Gastrocnemius medialis (tissue), 4 donors: ENCODE measurements at regions of chr4 and their contacts with region 1.

Region 1: DNA sequence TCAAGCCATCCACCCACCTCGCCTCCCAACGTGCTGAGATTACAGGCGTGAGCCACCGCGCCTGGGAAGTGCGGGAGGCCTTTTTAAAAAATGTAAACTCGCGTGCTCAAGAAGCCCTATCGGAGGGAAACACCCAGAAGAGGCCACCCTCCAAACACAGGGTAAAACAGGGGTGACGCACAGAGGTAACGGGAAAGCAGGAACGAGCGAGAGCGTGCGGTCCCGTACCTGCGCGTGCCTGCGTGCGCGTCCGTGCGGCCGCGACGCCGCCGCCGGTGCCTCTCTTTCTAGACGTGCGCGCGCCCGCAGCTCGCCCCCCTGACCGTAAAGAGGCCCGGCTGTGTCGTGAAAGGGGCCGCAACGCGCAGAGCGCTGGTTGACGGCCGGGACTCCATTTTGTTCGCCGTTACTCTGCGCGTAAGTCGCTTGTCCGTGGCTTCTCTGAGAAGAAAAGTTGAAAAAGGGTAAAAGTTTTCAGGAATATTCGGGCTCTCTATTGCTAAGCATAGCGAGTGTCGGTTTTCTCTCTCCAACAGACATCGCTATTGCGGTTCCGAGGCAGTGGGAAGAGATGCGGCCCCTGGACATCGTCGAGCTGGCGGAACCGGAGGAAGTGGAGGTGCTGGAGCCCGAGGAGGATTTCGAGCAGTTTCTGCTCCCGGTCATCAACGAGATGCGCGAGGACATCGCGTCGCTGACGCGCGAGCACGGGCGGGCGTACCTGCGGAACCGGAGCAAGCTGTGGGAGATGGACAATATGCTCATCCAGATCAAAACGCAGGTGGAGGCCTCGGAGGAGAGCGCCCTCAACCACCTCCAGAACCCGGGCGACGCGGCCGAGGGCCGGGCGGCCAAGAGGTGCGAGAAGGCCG is at the start of gene MRFAP1:
- DNase-seq: peak; percentile 91 to 94
- ATAC-seq: peak; percentile 85 to 93
- H3K4me3 ChIP-seq: peak within 1 kb of the TSS; percentile 75 to 99 (median 86)
- H3K27ac ChIP-seq: peak within 1 kb of the TSS; percentile 91 to 98 (median 94)
- H3K4me1 ChIP-seq: peaks cover 35 to 48% of the 10 kb centered on the region in 2 donors
- H3K27me3 ChIP-seq: no peaks in the 10 kb centered on the region
- CTCF ChIP-seq: peak in 1 of 5 experiments; percentile 23
- POLR2A ChIP-seq: peak; percentile 76 to 88
- total RNA-seq, gene MRFAP1: 180 to 281 (median 206) TPM

Region 2: DNA sequence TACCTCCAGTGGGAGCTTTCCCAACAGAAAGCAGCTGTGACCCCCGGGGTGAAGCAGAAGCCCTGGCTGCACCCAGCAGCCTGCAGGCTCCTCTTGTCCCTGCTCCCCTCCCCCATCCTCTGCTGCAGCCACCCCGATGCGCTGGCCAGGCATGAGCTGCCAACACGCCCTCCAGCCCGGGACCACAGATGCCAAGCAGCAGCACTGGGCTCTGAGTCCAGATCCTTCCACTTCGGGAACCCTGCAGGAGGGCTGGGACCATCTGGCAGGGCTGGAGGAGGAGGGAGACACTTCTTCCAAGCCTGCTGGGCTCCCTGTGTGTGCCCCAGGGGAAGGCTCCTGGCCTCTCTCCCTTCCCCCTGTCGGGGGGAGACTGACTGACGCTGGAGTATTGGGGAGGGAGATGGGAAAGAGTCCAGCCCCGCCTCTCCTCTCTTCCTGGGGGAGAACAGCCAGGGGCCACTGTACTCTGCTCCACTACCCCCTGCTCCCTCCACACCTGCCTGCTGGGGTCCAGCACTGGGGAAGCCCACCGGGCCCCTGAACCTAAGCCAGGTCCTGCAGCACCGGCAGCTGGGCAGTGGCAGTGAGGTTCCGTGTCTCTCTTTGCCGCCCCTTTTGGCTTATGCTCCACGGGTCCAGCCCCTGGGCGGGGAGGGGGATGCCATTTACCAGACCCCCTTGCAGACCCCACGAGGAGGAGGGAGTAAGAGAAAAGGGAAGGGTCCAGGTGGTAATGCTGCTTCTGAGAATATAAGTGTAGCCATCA is 223.8 kb before region 1 on chr4:
- in situ Hi-C with region 1: no loop called
- intact Hi-C with region 1: no loop called
- DNase-seq: no peak
- ATAC-seq: no peak
- H3K4me3 ChIP-seq: no peak overlapping the region
- H3K27ac ChIP-seq: no peak overlapping the region
- H3K4me1 ChIP-seq: no peaks in the 10 kb centered on the region
- H3K27me3 ChIP-seq: peaks cover 0 to 11% (median 0%) of the 10 kb centered on the region in 3 donors
- CTCF ChIP-seq: no peak
- POLR2A ChIP-seq: no peak

Region 3: GRCh38 chr4:6574747-6575502 is 65.6 kb before region 1 on chr4 and contains the start of gene MAN2B2:
- in situ Hi-C with region 1: no loop called
- intact Hi-C with region 1: loop called (anchors 5 kb)
- DNase-seq: peak; percentile 63 to 77
- ATAC-seq: peak; percentile 90 to 94
- H3K4me3 ChIP-seq: peak within 1 kb of the TSS; percentile 65 to 86 (median 79)
- H3K27ac ChIP-seq: peak within 1 kb of the TSS in 3 of 4 donors; percentile 45 to 61 (median 49)
- H3K4me1 ChIP-seq: peaks cover 9% of the 10 kb centered on the region in 2 donors
- H3K27me3 ChIP-seq: no peaks in the 10 kb centered on the region
- CTCF ChIP-seq: no peak
- POLR2A ChIP-seq: no peak
- total RNA-seq, gene MAN2B2: 3.3 to 5.6 (median 4.5) TPM

Region 4: DNA sequence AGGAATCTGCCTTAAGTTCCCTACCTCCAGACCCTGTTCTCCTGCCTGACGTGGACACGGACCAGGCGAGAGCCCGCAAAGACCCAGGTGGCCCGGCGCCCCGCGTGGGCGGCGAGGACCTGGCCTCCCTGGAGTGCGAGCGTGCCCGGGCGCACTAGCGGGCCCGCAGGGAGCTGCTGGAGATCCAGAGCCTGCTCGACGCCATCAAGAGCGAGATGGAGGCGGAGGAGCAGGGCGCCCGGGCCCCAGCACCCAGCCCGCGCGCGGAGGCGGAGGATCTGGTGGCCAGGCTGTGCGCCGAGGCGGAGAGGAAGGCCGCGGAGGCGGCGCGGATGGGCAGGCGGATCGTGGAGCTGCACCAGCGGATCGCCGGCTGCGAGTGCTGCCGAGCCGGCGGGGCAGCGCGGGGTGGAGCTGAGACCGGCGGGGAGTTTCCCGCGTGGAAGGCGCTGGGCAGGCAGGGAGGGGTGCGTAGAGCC is 18.1 kb after region 1 on chr4:
- in situ Hi-C with region 1: no loop called
- intact Hi-C with region 1: loop called (anchors 2 kb)
- DNase-seq: no peak
- ATAC-seq: peak; percentile 26 to 40
- H3K4me3 ChIP-seq: peak overlapping the region; percentile 37 to 57 (median 46)
- H3K27ac ChIP-seq: peak overlapping the region in 2 of 4 donors; percentile 37 to 43
- H3K4me1 ChIP-seq: no peaks in the 10 kb centered on the region
- H3K27me3 ChIP-seq: peaks cover 0 to 11% (median 4%) of the 10 kb centered on the region in 3 donors
- CTCF ChIP-seq: no peak
- POLR2A ChIP-seq: no peak

Region 5: DNA sequence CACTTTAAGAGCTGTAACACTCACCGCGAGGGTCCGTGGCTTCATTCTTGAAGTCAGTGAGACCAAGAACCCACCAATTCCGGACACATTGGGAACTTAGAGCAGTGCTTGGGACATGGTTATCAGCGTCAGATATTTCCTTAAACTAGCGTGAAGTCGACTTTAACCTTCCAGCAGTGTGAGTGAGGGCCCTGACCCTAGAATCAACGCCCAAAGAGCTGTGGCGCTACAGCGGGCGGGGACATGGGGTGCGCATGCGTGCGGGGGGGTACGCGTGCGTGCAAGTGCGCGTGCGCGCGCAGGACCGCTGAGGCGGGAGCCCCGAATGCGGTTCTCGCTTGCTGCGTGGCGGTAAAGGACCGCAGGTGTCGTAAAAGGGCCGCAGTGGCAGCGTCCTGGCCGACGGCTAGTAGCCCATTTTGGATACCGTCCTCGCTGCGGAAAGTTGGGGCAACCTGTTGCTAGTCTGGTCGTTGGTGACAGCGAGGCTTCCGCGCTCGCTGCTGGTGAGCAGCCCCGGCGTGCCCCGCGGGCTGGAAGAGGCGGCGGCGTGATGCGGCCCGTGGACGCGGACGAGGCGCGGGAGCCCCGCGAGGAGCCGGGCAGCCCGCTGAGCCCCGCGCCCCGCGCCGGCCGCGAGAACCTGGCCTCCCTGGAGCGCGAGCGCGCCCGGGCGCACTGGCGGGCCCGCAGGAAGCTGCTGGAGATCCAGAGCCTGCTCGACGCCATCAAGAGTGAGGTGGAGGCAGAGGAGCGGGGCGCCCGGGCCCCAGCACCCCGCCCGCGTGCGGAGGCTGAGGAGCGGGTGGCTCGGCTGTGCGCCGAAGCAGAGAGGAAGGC is 33.4 kb after region 1 on chr4:
- in situ Hi-C with region 1: no loop called
- intact Hi-C with region 1: loop called (anchors 1 kb)
- DNase-seq: peak; percentile 95 to 96
- ATAC-seq: peak; percentile 95 to 96
- H3K4me3 ChIP-seq: peak overlapping the region; percentile 68 to 90 (median 72)
- H3K27ac ChIP-seq: peak overlapping the region; percentile 82 to 96 (median 89)
- H3K4me1 ChIP-seq: peaks cover 27 to 33% of the 10 kb centered on the region in 2 donors
- H3K27me3 ChIP-seq: no peaks in the 10 kb centered on the region
- CTCF ChIP-seq: peak in 2 of 5 experiments; percentile 15 to 21
- POLR2A ChIP-seq: peak; percentile 68 to 79

Region 6: GRCh38 chr4:6709230-6710114 is 68.9 kb after region 1 on chr4 and contains the start of gene MRFAP1L1:
- in situ Hi-C with region 1: no loop called
- intact Hi-C with region 1: loop called (anchors 1 kb)
- DNase-seq: peak; percentile 94 to 97
- ATAC-seq: peak; percentile 86 to 90
- H3K4me3 ChIP-seq: peak within 1 kb of the TSS; percentile 86 to 94 (median 92)
- H3K27ac ChIP-seq: peak within 1 kb of the TSS; percentile 87 to 95 (median 90)
- H3K4me1 ChIP-seq: peaks cover 48 to 51% of the 10 kb centered on the region in 2 donors
- H3K27me3 ChIP-seq: no peaks in the 10 kb centered on the region
- CTCF ChIP-seq: peak in 3 of 5 experiments; percentile 4 to 21 (median 8)
- POLR2A ChIP-seq: peak; percentile 50 to 75
- total RNA-seq, gene MRFAP1L1: 43.8 to 54.6 (median 46.9) TPM

Region 7: GRCh38 chr4:6783053-6783981 is 142.8 kb after region 1 on chr4:
- in situ Hi-C with region 1: no loop called
- intact Hi-C with region 1: loop called (anchors 5 kb)
- DNase-seq: peak; percentile 88 to 93
- ATAC-seq: peak; percentile 67 to 72
- H3K4me3 ChIP-seq: peak overlapping the region; percentile 74 to 98 (median 82)
- H3K27ac ChIP-seq: peak overlapping the region; percentile 95 to 100 (median 98)
- H3K4me1 ChIP-seq: peaks cover 58 to 59% of the 10 kb centered on the region in 2 donors
- H3K27me3 ChIP-seq: no peaks in the 10 kb centered on the region
- CTCF ChIP-seq: peak in 4 of 5 experiments; percentile 4 to 42 (median 19)
- POLR2A ChIP-seq: peak; percentile 94 to 95

Region 8: GRCh38 chr4:6909073-6909965 is 268.8 kb after region 1 on chr4 and contains the start of gene TBC1D14:
- in situ Hi-C with region 1: no loop called
- intact Hi-C with region 1: loop called (anchors 1 kb)
- DNase-seq: peak; percentile 85 to 86
- ATAC-seq: peak; percentile 85 to 88
- H3K4me3 ChIP-seq: peak within 1 kb of the TSS; percentile 73 to 100 (median 79)
- H3K27ac ChIP-seq: peak within 1 kb of the TSS; percentile 93 to 100 (median 98)
- H3K4me1 ChIP-seq: peaks cover 38 to 42% of the 10 kb centered on the region in 2 donors
- H3K27me3 ChIP-seq: no peaks in the 10 kb centered on the region
- CTCF ChIP-seq: peak; percentile 5 to 62 (median 36)
- POLR2A ChIP-seq: peak; percentile 81 to 87
- total RNA-seq, gene TBC1D14: 36.0 to 56.2 (median 41.4) TPM